Dorsolateral prefrontal cortex (tissue), 120 donors: ENCODE measurements at regions of chr15 and their contacts with region 1.

Region 1: DNA sequence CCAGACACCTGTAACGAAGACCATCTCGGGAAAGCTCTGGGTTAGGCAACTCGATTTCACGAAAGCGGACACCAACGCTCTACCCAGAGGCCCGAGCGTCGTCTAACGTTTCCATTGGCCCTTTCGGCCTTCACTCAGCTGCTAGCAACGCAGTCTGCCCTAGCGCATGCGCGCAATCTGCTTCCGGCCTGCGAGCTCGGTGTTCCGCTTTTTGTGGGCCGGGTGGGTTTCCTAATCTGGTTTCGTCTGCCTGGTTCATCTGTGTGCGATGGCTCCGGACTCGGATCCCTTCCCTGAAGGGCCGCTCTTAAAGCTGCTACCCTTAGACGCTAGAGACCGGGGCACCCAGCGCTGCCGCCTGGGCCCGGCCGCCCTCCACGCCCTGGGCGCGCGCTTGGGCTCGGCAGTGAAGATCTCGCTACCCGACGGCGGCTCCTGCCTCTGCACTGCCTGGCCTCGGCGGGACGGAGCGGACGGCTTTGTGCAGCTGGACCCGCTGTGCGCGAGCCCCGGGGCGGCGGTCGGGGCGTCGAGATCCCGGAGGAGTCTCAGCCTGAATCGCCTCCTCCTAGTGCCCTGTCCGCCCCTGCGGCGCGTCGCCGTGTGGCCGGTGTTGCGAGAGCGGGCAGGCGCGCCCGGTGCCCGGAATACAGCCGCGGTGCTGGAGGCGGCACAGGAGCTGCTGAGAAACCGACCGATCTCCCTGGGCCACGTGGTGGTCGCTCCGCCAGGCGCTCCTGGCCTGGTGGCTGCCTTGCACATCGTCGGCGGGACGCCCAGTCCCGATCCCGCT is 24.0 kb upstream of the GATM start:
- DNase-seq: peak; percentile 93 to 97 (median 96)
- H3K4me3 ChIP-seq: peak overlapping the region; percentile 60 to 99 (median 93)
- H3K27ac ChIP-seq: peak overlapping the region; percentile 68 to 98 (median 94)
- H3K27me3 ChIP-seq: no peaks in the 10 kb centered on the region
- CTCF ChIP-seq: peak in 23 of 56 donors; percentile 4 to 60 (median 34)

Region 2: GRCh38 chr15:45166834-45167630 is 235.3 kb before region 1 on chr15:
- intact Hi-C with region 1: loop called (anchors 5 kb)
- DNase-seq: peak; percentile 59 to 89 (median 77)
- H3K4me3 ChIP-seq: peak overlapping the region; percentile 59 to 91 (median 75)
- H3K27ac ChIP-seq: peak overlapping the region; percentile 96 to 100 (median 99)
- H3K27me3 ChIP-seq: no peaks in the 10 kb centered on the region
- CTCF ChIP-seq: peak in 54 of 56 donors; percentile 18 to 70 (median 48)

Region 3: GRCh38 chr15:45198337-45199135 is 203.8 kb before region 1 on chr15:
- intact Hi-C with region 1: loop called (anchors 2 to 5 kb)
- DNase-seq: peak; percentile 90 to 98 (median 94)
- H3K4me3 ChIP-seq: peak overlapping the region; percentile 47 to 94 (median 76)
- H3K27ac ChIP-seq: peak overlapping the region; percentile 85 to 100 (median 99)
- H3K27me3 ChIP-seq: no peaks in the 10 kb centered on the region
- CTCF ChIP-seq: peak; percentile 57 to 91 (median 78)

Region 4: DNA sequence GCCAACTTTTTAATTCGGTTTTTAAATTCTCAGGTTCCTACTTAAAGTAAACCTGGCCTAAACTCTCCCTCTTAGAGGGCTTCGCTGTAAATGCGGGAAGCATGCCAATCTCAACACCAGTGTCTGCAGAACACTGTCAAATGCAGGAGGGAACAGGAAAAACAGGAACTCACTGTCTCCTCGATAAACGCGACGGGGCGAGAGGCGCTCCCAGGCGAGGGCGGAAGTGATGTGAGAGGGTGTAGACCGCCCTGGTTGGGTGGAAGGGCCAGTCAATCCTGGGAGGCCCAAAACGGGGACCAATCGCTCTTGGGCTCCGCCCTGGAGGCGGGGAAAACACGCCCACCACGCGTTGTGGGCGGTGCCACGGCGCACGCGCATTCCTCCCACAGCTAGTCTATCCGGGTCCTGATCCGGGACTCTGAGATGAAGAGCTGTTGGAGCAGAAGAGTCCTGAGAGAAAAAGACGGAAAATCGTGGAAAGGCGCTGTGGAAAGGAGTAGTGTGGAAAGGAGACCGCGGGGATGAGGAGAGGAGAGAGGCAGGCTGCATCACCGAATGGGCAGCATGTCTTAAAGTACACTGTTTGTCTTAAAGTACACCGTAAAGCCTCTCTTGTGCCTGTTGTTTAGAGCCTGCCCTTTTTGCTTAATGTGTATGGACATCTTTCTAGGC is 123.2 kb before region 1 on chr15:
- intact Hi-C with region 1: loop called (anchors 2 kb)
- DNase-seq: peak; percentile 96 to 99 (median 98)
- H3K4me3 ChIP-seq: peak overlapping the region; percentile 59 to 96 (median 79)
- H3K27ac ChIP-seq: peak overlapping the region; percentile 35 to 96 (median 88)
- H3K27me3 ChIP-seq: no peaks in the 10 kb centered on the region
- CTCF ChIP-seq: peak in 31 of 56 donors; percentile 4 to 57 (median 22)

Region 5: DNA sequence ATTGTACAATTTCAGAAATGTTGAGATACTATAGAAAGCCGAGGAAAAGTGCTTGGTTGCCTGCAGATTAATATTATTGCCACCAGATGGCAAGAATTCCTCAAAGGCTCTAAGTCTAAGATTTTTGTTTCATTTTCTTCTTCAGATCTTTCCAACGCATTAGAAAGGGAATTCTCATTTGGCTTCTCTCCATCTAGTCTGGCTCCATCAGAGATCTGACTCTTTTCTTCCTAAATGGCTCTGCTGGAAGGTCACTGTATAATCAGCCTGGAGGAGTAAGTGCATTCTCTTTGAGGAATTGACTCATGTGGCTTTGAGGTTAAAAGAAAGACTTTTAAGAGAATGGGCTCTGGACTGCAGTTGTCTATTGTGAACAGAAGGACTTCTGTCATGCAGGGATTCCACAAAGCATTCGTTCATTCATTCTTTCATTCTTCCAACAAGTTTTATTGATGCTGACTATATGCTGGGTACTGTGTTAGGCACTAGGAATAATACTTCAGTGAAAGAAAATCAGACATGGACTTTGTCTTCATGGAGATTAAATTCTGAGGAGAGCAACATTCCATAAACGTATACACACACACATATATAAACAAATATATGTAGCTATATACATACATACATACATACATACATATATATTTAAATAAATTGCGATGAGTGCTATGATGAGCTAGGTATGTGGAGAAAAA is 95.0 kb before region 1 on chr15:
- intact Hi-C with region 1: loop called (anchors 2 to 5 kb)
- DNase-seq: no peak
- H3K4me3 ChIP-seq: peak overlapping the region in 50 of 59 donors; percentile 5 to 57 (median 38)
- H3K27ac ChIP-seq: peak overlapping the region in 41 of 59 donors; percentile 1 to 81 (median 46)
- H3K27me3 ChIP-seq: peaks cover 0 to 6% (median 0%) of the 10 kb centered on the region in 45 donors
- CTCF ChIP-seq: peak; percentile 55 to 85 (median 74)

Region 6: DNA sequence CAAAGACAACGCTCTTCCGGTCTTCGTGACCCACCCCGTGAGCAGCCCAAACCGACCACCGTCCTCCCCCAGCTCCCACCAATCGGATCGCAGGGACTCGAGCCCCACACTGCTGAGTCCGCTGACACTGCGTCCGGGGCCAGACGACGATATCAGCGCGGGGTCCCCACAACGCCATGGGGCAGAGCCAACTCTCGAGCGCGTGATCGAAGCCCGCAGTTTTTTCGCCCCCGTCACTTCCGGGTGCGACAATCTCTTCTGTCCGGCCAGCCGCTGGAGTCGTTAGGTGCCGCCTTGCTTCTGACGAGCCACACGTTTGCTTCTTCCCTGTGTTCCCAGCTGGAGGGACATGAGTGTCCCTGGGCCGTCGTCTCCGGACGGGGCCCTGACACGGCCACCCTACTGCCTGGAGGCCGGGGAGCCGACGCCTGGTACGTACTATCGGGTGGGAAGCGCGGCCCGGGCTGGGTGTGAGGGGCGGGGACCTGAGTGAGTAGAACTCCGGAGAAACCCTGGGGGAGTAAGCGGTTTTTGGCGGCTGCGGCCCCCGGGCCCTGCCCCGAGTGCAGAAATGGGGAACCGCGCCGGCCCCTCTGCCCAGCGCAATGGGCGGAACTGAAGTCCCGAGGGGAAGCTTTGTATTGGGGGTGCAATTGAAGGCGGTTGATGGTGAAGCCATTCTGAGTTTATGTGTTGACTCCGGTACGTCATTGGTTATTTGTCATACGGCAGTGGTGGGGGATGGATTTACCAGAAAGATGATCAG is 184.9 kb after region 1 on chr15 and contains the start of gene BLOC1S6:
- intact Hi-C with region 1: loop called in 1 of 2 experiments (anchors 1 kb)
- DNase-seq: peak; percentile 84 to 94 (median 92)
- H3K4me3 ChIP-seq: peak within 1 kb of the TSS; percentile 68 to 99 (median 89)
- H3K27ac ChIP-seq: peak within 1 kb of the TSS; percentile 94 to 100 (median 99)
- H3K27me3 ChIP-seq: no peaks in the 10 kb centered on the region
- CTCF ChIP-seq: peak in 24 of 56 donors; percentile 2 to 51 (median 23)
- total RNA-seq, gene BLOC1S6: 30.3 to 80.3 (median 55.0) TPM

Region 7: GRCh38 chr15:45634442-45635190 is 232.3 kb after region 1 on chr15 and contains the start of gene SQOR:
- intact Hi-C with region 1: no loop called
- DNase-seq: peak in 7 of 10 donors; percentile 3 to 62 (median 44)
- H3K4me3 ChIP-seq: peak within 1 kb of the TSS; percentile 35 to 81 (median 68)
- H3K27ac ChIP-seq: peak within 1 kb of the TSS in 53 of 59 donors; percentile 3 to 90 (median 70)
- H3K27me3 ChIP-seq: peaks cover 0 to 16% (median 0%) of the 10 kb centered on the region in 45 donors
- CTCF ChIP-seq: peak in 1 of 56 donors; percentile 5
- total RNA-seq, gene SQOR: 2.8 to 18.8 (median 7.2) TPM

Region 8: GRCh38 chr15:45790325-45790943 is 388.1 kb after region 1 on chr15:
- intact Hi-C with region 1: no loop called
- DNase-seq: peak in 1 of 10 donors; percentile 29
- H3K4me3 ChIP-seq: no peak overlapping the region
- H3K27ac ChIP-seq: no peak overlapping the region
- H3K27me3 ChIP-seq: peaks cover 0 to 18% (median 0%) of the 10 kb centered on the region in 45 donors
- CTCF ChIP-seq: peak; percentile 15 to 72 (median 53)